ENCODE measurements at regions of chr11 and their contacts with region 1.

Region 1: GRCh38 chr11:83285771-83286528 is at the start of gene CCDC90B:
- DNase-seq: peak; percentile 94 to 96 (median 96)
- H3K4me3 ChIP-seq: peak within 1 kb of the TSS; percentile 76 to 95 (median 93)
- H3K4me3 Mint-ChIP-seq: peak within 1 kb of the TSS; percentile 93 to 96
- H3K27ac ChIP-seq: peak within 1 kb of the TSS; percentile 86 to 97
- H3K27ac Mint-ChIP-seq: peak within 1 kb of the TSS; percentile 96 to 100 (median 100)
- H3K4me1 ChIP-seq: peaks cover 23 to 26% of the 10 kb centered on the region in 2 donors
- H3K4me1 Mint-ChIP-seq: peaks cover 31% of the 10 kb centered on the region
- H3K27me3 ChIP-seq: no peaks in the 10 kb centered on the region
- H3K27me3 Mint-ChIP-seq: peaks cover 0 to 4% (median 2%) of the 10 kb centered on the region in 3 donors
- CTCF ChIP-seq: no peak
- polyA plus RNA-seq, gene CCDC90B: 15.3 to 46.2 (median 39.6) TPM

Region 2: DNA sequence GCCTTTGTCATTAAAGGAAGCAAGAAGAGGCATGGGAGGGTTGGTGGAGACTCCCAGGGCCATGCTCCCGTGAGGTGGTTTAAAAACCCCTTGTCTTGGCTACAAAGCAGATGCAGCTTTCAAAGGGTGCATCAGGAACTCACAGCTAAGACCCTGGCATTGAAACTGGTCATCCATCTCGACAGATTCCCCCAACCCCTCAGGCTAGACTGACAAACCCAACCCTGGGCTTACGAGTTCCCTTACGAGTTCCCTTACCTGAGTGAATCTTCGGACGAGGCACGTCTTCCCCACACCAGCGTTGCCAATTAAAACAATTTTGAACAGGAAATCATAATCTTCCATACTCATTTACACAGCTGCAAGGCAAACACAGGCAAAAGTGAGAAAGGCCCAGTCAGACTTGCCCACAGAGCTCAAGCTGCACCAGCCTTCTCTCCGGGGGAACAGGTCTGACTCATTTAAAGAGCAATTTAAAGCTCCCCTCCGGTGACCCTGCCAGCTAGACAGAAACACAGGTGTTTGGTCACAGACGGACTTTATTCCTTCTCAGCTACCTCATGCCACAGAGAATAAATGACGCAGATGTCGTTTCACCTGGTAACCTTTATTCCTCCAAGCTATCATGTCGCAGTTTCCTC is 288.9 kb before region 1 on chr11:
- intact Hi-C with region 1: no loop called
- DNase-seq: no peak
- H3K4me3 ChIP-seq: no peak overlapping the region
- H3K4me3 Mint-ChIP-seq: no peak overlapping the region
- H3K27ac ChIP-seq: no peak overlapping the region
- H3K27ac Mint-ChIP-seq: no peak overlapping the region
- H3K4me1 ChIP-seq: no peaks in the 10 kb centered on the region
- H3K4me1 Mint-ChIP-seq: no peaks in the 10 kb centered on the region
- H3K27me3 ChIP-seq: no peaks in the 10 kb centered on the region
- H3K27me3 Mint-ChIP-seq: peaks cover 2 to 7% (median 5%) of the 10 kb centered on the region in 3 donors
- CTCF ChIP-seq: no peak

Region 3: GRCh38 chr11:83156150-83156995 is 129.6 kb before region 1 on chr11:
- intact Hi-C with region 1: loop called in 1 of 2 experiments (anchors 5 kb)
- DNase-seq: peak; percentile 100
- H3K4me3 ChIP-seq: peak overlapping the region; percentile 77 to 98 (median 91)
- H3K4me3 Mint-ChIP-seq: peak overlapping the region; percentile 98 to 99
- H3K27ac ChIP-seq: peak overlapping the region; percentile 95 to 97
- H3K27ac Mint-ChIP-seq: peak overlapping the region; percentile 90 to 100 (median 100)
- H3K4me1 ChIP-seq: peaks cover 25 to 40% of the 10 kb centered on the region in 2 donors
- H3K4me1 Mint-ChIP-seq: peaks cover 24% of the 10 kb centered on the region
- H3K27me3 ChIP-seq: no peaks in the 10 kb centered on the region
- H3K27me3 Mint-ChIP-seq: peaks cover 0 to 4% (median 0%) of the 10 kb centered on the region in 3 donors
- CTCF ChIP-seq: no peak

Region 4: DNA sequence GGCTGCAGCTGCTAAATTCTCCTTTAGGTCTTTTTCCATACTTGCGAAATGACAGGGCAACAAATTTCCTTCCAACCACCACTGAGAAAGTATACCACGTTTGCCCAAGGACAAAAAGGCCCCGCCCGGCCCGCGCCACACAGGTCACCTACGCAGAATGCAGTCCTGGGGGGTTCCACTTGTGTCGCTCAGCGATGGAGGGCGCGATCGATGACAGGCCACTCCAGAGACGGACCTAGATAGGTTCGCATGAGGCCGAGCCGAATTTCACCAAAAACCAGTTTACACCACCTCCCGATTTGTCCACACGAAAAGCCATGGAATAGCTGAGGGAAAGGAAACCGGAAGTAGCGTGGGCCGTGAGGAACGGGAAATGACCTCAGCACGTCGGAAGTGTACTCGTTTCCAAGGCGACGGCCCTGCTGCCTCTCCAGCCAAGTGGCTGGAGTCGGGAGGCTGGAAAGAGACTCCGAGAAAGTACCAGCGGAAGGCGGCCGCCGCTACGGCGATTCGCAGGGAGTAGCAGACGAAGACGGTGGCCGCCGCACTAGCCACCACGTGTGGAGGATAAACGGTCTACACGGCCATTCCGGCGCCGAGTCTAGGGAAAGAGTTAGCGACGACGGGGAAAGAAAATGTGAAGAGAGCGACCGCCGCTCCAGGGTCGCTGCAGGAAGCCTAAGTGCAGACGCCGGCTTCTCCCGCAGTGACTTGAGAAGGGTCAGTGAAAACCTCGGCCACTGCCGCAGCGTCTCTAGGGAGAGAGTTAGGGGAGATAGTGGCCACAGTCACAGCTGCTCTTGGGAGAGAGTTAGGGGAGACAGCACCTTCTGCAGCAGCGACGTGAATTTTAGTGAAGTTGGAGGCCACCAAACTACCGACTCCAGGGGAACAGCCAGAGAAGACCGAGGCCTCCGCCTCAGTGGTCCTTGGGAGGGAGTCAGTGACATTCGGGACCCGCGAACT is 92.4 kb before region 1 on chr11 and contains the start of gene ANKRD42:
- intact Hi-C with region 1: loop called (anchors 5 to 10 kb)
- DNase-seq: peak; percentile 90 to 96 (median 96)
- H3K4me3 ChIP-seq: peak within 1 kb of the TSS; percentile 82 to 99 (median 85)
- H3K4me3 Mint-ChIP-seq: peak within 1 kb of the TSS; percentile 97 to 99
- H3K27ac ChIP-seq: peak within 1 kb of the TSS; percentile 93 to 96
- H3K27ac Mint-ChIP-seq: peak within 1 kb of the TSS; percentile 97 to 100 (median 99)
- H3K4me1 ChIP-seq: peaks cover 23 to 27% of the 10 kb centered on the region in 2 donors
- H3K4me1 Mint-ChIP-seq: peaks cover 31% of the 10 kb centered on the region
- H3K27me3 ChIP-seq: no peaks in the 10 kb centered on the region
- H3K27me3 Mint-ChIP-seq: no peaks in the 10 kb centered on the region
- CTCF ChIP-seq: no peak
- polyA plus RNA-seq, gene ANKRD42: 4.3 to 6.2 (median 6.1) TPM

Measured in CD14-positive monocyte (primary cell).